Breast epithelium (tissue), 4 donors: ENCODE measurements at regions of chr3 and their contacts with region 1.

Region 1: GRCh38 chr3:125418306-125418705 is 43.2 kb upstream of the ZNF148 start:
- DNase-seq: no peak
- H3K4me3 ChIP-seq: no peak overlapping the region
- H3K27ac ChIP-seq: no peak overlapping the region
- H3K4me1 ChIP-seq: no peaks in the 10 kb centered on the region
- H3K27me3 ChIP-seq: no peaks in the 10 kb centered on the region
- CTCF ChIP-seq: no peak
- POLR2A ChIP-seq: no peak

Region 2: GRCh38 chr3:125398954-125399353 is 19.4 kb before region 1 on chr3:
- intact Hi-C with region 1: loop called (anchors 1 kb)
- DNase-seq: no peak
- H3K4me3 ChIP-seq: no peak overlapping the region
- H3K27ac ChIP-seq: no peak overlapping the region
- H3K4me1 ChIP-seq: no peaks in the 10 kb centered on the region
- H3K27me3 ChIP-seq: no peaks in the 10 kb centered on the region
- CTCF ChIP-seq: no peak
- POLR2A ChIP-seq: no peak

Region 3: DNA sequence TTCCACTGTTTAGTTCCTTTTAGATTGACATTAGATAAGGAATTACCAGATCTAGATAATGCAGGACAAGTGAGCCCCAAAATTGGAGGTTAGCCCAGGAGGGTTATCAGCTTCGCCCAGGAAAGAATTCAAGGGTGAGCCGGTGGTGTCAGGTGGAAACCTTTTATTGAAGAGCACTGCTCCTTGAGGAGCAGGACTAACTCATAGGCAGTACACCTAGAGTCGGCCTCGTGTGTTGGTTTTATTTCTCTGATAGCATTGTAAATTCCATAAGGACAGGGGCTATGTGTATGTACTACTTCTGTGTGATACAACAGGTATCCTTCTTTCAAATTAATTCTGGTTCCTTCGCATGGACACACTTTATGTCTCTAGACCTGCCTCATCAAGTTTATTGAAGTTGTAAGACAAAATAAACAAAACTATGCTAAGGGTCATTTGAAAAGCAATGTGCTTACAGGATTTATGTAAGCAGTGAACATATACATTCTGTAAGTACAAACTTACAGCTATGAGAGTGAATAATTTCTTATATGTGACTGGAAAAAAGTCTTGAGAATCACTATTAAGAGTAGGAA is 44.5 kb after region 1 on chr3:
- intact Hi-C with region 1: no loop called
- DNase-seq: no peak
- H3K4me3 ChIP-seq: no peak overlapping the region
- H3K27ac ChIP-seq: no peak overlapping the region
- H3K4me1 ChIP-seq: no peaks in the 10 kb centered on the region
- H3K27me3 ChIP-seq: no peaks in the 10 kb centered on the region
- CTCF ChIP-seq: no peak
- POLR2A ChIP-seq: no peak